Naive thymus-derived CD4-positive, alpha-beta T cell (primary cell): ENCODE measurements at regions of chr19 and their contacts with region 1.

Region 1: DNA sequence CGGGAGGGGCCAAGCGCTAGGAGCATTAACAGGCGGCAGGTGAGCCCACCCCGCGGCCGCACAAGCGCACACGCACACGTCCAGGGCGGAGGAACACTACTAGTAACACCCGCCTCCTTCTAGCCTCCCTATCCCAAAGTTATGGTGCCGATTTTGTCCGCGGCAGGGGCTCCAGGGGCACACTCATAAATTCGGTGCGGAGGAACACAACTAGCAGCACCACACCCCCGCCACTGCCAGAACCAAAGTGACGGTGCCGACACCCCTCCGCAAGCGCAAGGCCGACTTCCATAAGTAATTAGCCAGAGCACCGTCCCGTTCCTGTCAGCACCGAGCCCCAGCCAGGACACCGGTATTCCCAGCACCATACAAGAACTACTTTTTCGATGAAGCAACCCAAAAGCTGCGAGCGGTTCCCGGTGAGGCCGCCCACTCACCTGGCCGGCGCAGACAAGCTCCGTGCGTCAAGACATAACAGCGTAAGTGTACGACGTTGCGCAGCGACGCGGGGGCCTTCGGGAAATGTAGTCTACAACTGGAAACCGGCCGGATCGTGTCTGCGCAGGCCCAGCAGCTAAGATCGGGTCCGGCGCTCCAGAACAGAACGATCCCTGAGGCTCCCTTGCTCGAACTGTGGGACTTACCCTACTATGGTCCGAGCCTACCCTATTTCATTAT is at the starts of genes ZNF540 and ZNF571:
- DNase-seq: peak; percentile 70 to 95 (median 92)
- ATAC-seq: peak; percentile 96
- H3K4me3 ChIP-seq: peak within 1 kb of the TSS; percentile 80
- H3K4me3 Mint-ChIP-seq: peak within 1 kb of the TSS; percentile 94 to 100 (median 98)
- H3K27ac ChIP-seq: peak within 1 kb of the TSS; percentile 93
- H3K27ac Mint-ChIP-seq: peak within 1 kb of the TSS; percentile 93 to 100 (median 99)
- H3K4me1 ChIP-seq: peaks cover 7 to 18% of the 10 kb centered on the region in 2 donors
- H3K4me1 Mint-ChIP-seq: peaks cover 13 to 56% (median 39%) of the 10 kb centered on the region in 7 donors
- H3K27me3 ChIP-seq: no peaks in the 10 kb centered on the region
- H3K27me3 Mint-ChIP-seq: no peaks in the 10 kb centered on the region
- total RNA-seq, gene ZNF540: 0.99 to 22.7 (median 17.6) TPM
- total RNA-seq, gene ZNF571: 1.5 to 12.4 (median 9.0) TPM

Region 2: DNA sequence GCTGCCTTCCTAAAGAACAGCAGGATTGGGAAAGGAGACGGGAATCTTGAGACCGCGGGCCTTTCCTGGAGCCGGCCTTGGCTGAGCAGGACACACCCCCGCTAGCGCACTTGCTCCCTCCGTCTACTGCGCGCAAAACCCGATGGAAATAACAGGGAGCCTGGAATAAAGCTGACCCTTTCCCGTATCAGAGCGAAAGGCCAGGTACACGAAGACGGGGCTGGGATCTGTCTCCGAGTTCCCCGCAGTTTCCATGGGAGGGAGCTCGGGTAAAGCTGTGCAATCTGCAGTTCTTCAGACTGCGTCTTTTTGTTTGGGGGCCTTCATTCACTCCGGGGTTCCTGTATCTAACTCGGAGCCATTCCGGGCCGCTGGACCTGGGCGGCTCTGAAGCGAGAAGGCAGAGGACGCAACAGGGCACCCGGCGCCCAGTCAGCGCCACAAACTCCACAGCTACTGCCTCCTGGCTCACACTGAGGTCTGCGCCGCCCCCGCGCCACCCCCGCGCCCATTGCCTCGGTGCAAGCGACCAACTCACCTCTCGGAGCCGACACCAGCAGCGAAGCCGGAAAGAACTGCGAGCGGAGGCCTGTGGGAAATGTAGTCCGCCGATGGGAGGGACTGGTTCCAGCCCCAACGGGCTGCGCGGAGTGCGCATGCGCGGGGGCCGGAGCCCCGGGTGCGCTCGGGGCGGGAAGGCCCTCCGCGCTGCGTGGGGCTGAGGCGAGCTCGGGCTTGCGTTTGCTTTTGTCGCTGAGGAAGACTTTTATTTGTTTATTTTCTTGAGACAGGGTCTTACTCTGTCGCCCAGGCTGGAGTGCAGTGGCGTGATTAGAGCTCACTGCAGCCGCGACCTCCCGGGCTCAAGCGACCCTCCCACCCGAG is 1215.6 kb before region 1 on chr19 and contains the start of gene ZFP14:
- CTCF ChIA-PET with region 1: no interaction called
- POLR2A ChIA-PET with region 1: no interaction called
- intact Hi-C with region 1: loop called in 1 of 2 experiments (anchors 10 kb)
- DNase-seq: peak; percentile 86 to 95 (median 93)
- ATAC-seq: peak; percentile 99
- H3K4me3 ChIP-seq: peak within 1 kb of the TSS; percentile 86
- H3K4me3 Mint-ChIP-seq: peak within 1 kb of the TSS; percentile 82 to 98 (median 94)
- H3K27ac ChIP-seq: peak within 1 kb of the TSS; percentile 86
- H3K27ac Mint-ChIP-seq: peak within 1 kb of the TSS; percentile 55 to 98 (median 94)
- H3K4me1 ChIP-seq: peaks cover 0 to 10% of the 10 kb centered on the region in 2 donors
- H3K4me1 Mint-ChIP-seq: peaks cover 9 to 23% (median 21%) of the 10 kb centered on the region in 7 donors
- H3K27me3 ChIP-seq: no peaks in the 10 kb centered on the region
- H3K27me3 Mint-ChIP-seq: no peaks in the 10 kb centered on the region
- total RNA-seq, gene ZFP14: 5.3 to 24.0 (median 9.2) TPM

Region 3: GRCh38 chr19:36973021-36973843 is 621.2 kb before region 1 on chr19:
- CTCF ChIA-PET with region 1: no interaction called
- POLR2A ChIA-PET with region 1: no interaction called
- intact Hi-C with region 1: loop called (anchors 1 to 2 kb)
- DNase-seq: peak; percentile 56 to 84 (median 73)
- ATAC-seq: peak; percentile 96
- H3K4me3 ChIP-seq: peak overlapping the region; percentile 100
- H3K4me3 Mint-ChIP-seq: peak overlapping the region; percentile 92 to 99 (median 97)
- H3K27ac ChIP-seq: peak overlapping the region; percentile 75
- H3K27ac Mint-ChIP-seq: peak overlapping the region; percentile 83 to 97 (median 92)
- H3K4me1 ChIP-seq: peaks cover 5 to 15% of the 10 kb centered on the region in 2 donors
- H3K4me1 Mint-ChIP-seq: peaks cover 9 to 22% (median 13%) of the 10 kb centered on the region in 7 donors
- H3K27me3 ChIP-seq: no peaks in the 10 kb centered on the region
- H3K27me3 Mint-ChIP-seq: no peaks in the 10 kb centered on the region

Region 4: GRCh38 chr19:37655689-37656371 is 61.4 kb after region 1 on chr19:
- CTCF ChIA-PET with region 1: no interaction called
- POLR2A ChIA-PET with region 1: interaction called, 7 read pairs
- intact Hi-C with region 1: loop called (anchors 1 kb)
- DNase-seq: peak; percentile 74 to 90 (median 86)
- ATAC-seq: peak; percentile 86
- H3K4me3 ChIP-seq: peak overlapping the region; percentile 95
- H3K4me3 Mint-ChIP-seq: peak overlapping the region; percentile 82 to 99 (median 96)
- H3K27ac ChIP-seq: peak overlapping the region; percentile 89
- H3K27ac Mint-ChIP-seq: peak overlapping the region; percentile 81 to 99 (median 97)
- H3K4me1 ChIP-seq: peaks cover 8 to 16% of the 10 kb centered on the region in 2 donors
- H3K4me1 Mint-ChIP-seq: peaks cover 28 to 40% (median 33%) of the 10 kb centered on the region in 7 donors
- H3K27me3 ChIP-seq: no peaks in the 10 kb centered on the region
- H3K27me3 Mint-ChIP-seq: peaks cover 0 to 3% (median 0%) of the 10 kb centered on the region in 5 donors

Region 5: GRCh38 chr19:37719111-37719926 is 124.9 kb after region 1 on chr19 and contains the start of gene ZNF607:
- CTCF ChIA-PET with region 1: no interaction called
- POLR2A ChIA-PET with region 1: no interaction called
- intact Hi-C with region 1: loop called in 1 of 2 experiments (anchors 1 kb)
- DNase-seq: peak; percentile 43 to 80 (median 70)
- ATAC-seq: peak; percentile 87
- H3K4me3 ChIP-seq: peak within 1 kb of the TSS; percentile 63
- H3K4me3 Mint-ChIP-seq: peak within 1 kb of the TSS; percentile 80 to 95 (median 91)
- H3K27ac ChIP-seq: peak within 1 kb of the TSS; percentile 77
- H3K27ac Mint-ChIP-seq: peak within 1 kb of the TSS; percentile 80 to 98 (median 86)
- H3K4me1 ChIP-seq: peaks cover 6 to 7% of the 10 kb centered on the region in 2 donors
- H3K4me1 Mint-ChIP-seq: peaks cover 7 to 17% (median 10%) of the 10 kb centered on the region in 7 donors
- H3K27me3 ChIP-seq: no peaks in the 10 kb centered on the region
- H3K27me3 Mint-ChIP-seq: peaks cover 0 to 5% (median 0%) of the 10 kb centered on the region in 5 donors
- total RNA-seq, gene ZNF607: 3.5 to 10.8 (median 6.5) TPM

Region 6: DNA sequence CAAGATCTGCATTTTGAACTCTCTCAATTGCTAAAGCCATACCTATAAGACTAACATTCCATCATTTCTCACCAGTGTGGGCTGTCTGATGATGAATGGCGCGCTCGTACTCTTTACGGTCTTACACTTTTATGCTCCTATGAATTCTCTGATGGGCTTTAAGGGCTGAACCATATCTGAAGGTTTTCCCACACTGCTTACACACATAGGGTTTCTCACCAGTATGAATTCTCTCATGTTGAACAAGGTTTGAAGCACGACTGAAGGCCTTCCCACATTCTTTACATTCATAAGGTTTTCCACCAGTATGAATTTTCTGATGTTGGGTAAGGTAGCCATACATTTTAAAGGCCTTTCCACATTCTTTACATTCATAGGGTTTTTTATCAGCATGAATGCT is 143.9 kb after region 1 on chr19:
- CTCF ChIA-PET with region 1: no interaction called
- POLR2A ChIA-PET with region 1: no interaction called
- intact Hi-C with region 1: no loop called
- DNase-seq: no peak
- ATAC-seq: no peak
- H3K4me3 ChIP-seq: no peak overlapping the region
- H3K4me3 Mint-ChIP-seq: no peak overlapping the region
- H3K27ac ChIP-seq: no peak overlapping the region
- H3K27ac Mint-ChIP-seq: no peak overlapping the region
- H3K4me1 ChIP-seq: no peaks in the 10 kb centered on the region
- H3K4me1 Mint-ChIP-seq: no peaks in the 10 kb centered on the region
- H3K27me3 ChIP-seq: no peaks in the 10 kb centered on the region
- H3K27me3 Mint-ChIP-seq: no peaks in the 10 kb centered on the region